ENCODE measurements at regions of chr16 and their contacts with region 1.

Region 1: DNA sequence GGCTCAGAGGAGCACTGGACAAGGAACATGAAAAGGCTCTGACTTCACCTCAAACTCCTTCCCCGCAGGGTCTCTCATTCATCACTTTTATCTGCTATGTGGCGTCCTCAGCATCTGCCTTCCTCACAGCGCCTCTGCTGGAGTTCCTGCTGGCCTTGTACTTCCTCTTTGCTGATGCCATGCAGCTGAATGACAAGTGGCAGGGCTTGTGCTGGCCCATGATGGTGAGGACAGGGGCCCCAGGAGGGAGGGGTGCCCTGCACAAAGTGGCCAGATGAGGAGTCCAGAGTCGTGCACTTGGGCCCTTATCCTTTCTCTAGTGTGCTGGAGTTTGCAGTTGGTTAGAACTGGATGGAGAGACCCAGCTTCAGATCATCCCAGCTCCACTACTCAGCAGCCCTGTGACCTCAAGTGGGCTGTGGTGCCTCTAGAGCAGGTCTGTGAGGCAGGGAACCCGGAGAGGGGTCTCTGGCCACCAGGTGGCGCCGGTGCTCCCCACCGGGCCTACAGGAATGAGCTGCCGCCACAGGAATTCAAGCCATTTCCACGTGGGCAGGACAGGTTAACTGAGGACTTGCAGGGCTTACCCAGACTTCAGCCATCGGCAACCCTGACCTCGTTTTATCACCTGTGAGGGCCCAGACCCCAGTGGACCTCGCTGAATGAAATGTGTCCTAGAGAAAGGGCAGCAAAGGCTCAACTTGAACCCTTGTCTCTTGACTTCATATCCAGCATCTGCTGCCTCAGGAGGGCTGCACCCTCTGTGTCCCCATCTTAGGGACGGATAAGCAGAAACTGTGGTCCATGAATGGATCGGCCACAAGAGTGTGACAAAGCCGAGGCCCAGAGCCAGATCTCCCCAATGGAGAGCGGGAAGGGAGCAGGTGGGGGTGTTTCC is 4.0 kb downstream of the CMTM3 start:
- DNase-seq: peak; percentile 82 to 98 (median 89)
- ATAC-seq: peak; percentile 72 to 80 (median 78)
- H3K4me3 ChIP-seq: no peak overlapping the region
- H3K27ac ChIP-seq: no peak overlapping the region
- H3K4me1 ChIP-seq: no peaks in the 10 kb centered on the region
- H3K27me3 ChIP-seq: no peaks in the 10 kb centered on the region
- CTCF ChIP-seq: peak; percentile 83 to 92 (median 90)

Region 2: GRCh38 chr16:66399930-66400329 is 208.6 kb before region 1 on chr16:
- intact Hi-C with region 1: loop called in 1 of 3 experiments (anchors 5 kb)
- DNase-seq: no peak
- ATAC-seq: no peak
- H3K4me3 ChIP-seq: no peak overlapping the region
- H3K27ac ChIP-seq: no peak overlapping the region
- H3K4me1 ChIP-seq: no peaks in the 10 kb centered on the region
- H3K27me3 ChIP-seq: no peaks in the 10 kb centered on the region
- CTCF ChIP-seq: no peak

Region 3: GRCh38 chr16:66660422-66661209 is 52.1 kb after region 1 on chr16:
- intact Hi-C with region 1: no loop called
- DNase-seq: peak in 4 of 6 donors; percentile 27 to 67 (median 53)
- ATAC-seq: peak; percentile 88 to 96 (median 95)
- H3K4me3 ChIP-seq: no peak overlapping the region
- H3K27ac ChIP-seq: peak overlapping the region in 2 of 4 donors; percentile 42 to 45
- H3K4me1 ChIP-seq: peaks cover 0 to 18% (median 6%) of the 10 kb centered on the region in 3 donors
- H3K27me3 ChIP-seq: no peaks in the 10 kb centered on the region
- CTCF ChIP-seq: no peak